ENCODE measurements at regions of chr14 and their contacts with region 1.

Region 1: GRCh38 chr14:105398044-105398725 is at the start of gene TEX22:
- DNase-seq: peak; percentile 86
- H3K4me3 Mint-ChIP-seq: peak within 1 kb of the TSS; percentile 93
- H3K27ac Mint-ChIP-seq: peak within 1 kb of the TSS; percentile 89
- H3K4me1 Mint-ChIP-seq: peaks cover 13% of the 10 kb centered on the region
- H3K27me3 Mint-ChIP-seq: no peaks in the 10 kb centered on the region
- total RNA-seq, gene TEX22: 7.4 and 9.1 TPM in 2 replicates

Region 2: DNA sequence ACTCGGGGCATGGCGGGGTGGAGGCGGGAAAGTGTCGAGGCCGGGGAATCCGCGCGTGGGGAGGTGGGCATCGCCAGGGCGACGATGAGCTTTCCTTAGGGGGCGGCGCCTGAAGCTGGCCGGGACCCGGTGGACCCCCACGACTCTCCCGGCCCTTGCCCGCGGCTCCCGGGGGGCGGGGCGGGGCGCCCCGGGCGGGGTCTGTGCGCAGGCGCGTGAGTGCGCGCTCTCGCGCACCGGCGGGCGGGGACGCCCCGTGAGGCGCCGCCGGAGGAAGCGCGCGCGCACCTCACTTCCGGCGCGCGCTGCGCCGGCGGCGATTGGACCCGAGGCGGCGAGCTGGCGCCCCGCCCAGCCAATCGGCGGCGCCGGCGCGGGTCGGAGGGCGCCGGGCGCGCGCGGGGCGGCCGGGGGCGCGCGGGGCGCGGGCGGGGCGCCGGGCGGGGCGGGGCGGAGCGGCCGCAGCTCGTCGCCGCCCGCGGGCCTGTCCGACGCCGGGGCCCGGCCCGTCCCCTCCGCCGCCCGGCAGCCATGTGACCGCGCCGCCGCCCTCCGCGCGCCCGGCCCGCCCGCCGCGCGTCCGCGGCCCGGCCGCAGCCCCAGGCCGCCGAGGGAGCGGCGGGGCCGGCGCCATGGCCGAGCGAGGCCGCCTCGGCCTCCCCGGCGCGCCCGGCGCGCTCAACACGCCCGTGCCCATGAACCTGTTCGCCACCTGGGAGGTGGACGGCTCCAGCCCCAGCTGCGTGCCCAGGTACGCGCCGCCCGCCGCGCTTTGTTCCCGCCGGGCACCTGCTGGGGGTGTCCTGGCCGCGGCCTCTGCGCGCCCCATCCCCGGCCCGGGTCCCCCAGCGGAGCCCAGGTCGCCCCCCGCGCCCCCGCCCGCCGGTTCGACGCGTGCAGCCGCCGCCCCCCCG is 83.6 kb before region 1 on chr14 and contains the start of gene PACS2:
- intact Hi-C with region 1: loop called (anchors 1 kb)
- DNase-seq: peak; percentile 78
- H3K4me3 Mint-ChIP-seq: peak within 1 kb of the TSS; percentile 90
- H3K27ac Mint-ChIP-seq: peak within 1 kb of the TSS; percentile 80
- H3K4me1 Mint-ChIP-seq: peaks cover 21% of the 10 kb centered on the region
- H3K27me3 Mint-ChIP-seq: peaks cover 11% of the 10 kb centered on the region
- total RNA-seq, gene PACS2: 28.2 and 32.3 TPM in 2 replicates

Region 3: DNA sequence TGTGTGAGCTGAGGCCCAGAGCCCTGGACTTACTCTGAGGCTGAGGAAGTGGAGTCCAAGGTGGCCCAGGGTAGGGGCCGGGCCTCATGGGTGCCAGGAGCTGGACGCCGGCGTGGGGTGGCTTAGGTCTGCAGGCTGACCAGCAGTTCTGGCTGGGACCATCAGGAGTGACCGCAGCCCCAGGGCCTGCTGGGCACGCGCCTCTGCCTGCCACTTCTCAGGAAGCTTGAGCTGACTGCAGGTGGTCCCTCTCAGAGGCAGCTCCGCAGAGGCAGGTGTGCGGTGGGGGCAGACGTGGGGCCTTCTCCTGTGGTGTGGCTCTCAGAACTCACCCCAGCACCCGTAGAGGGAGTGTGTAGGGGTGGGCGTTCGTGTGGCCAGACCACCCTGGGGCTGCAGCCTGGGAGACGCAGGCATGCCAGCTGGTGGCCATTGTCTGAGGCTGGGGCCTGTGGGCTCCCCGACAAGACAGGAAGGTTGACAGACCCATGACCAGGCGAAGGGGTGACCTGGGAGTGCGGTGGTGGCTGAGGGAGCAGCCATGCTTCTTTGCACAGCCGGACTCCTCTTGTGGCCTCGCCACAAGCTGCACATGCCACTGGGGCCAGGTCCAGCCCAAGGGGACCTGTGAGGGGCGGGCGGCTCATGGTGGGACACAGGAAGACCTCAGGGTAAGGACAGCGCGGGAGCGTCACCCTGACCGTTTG is 39.9 kb before region 1 on chr14:
- intact Hi-C with region 1: no loop called
- DNase-seq: no peak
- H3K4me3 Mint-ChIP-seq: no peak overlapping the region
- H3K27ac Mint-ChIP-seq: no peak overlapping the region
- H3K4me1 Mint-ChIP-seq: no peaks in the 10 kb centered on the region
- H3K27me3 Mint-ChIP-seq: no peaks in the 10 kb centered on the region

Region 4: DNA sequence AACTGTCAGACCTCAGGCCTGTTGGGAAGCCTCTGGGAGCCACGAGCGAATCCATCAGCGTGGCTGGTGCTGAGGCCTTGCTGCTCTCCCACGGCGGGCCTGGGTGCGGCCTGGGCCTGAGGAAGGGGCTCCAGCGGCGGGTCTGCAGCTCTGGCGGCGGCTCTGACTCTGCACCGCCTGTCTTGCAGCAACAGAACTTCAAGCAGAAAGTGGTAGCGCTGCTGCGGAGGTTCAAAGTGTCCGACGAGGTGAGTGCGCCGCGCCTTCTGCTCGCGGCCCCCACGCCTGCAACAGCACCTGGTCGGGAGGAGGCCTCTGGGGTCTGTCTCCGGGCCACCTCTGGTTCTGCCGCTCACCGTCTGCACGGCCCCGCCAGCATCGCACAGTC is 28.5 kb before region 1 on chr14:
- intact Hi-C with region 1: loop called (anchors 2 kb)
- DNase-seq: no peak
- H3K4me3 Mint-ChIP-seq: no peak overlapping the region
- H3K27ac Mint-ChIP-seq: no peak overlapping the region
- H3K4me1 Mint-ChIP-seq: peaks cover 5% of the 10 kb centered on the region
- H3K27me3 Mint-ChIP-seq: no peaks in the 10 kb centered on the region

Region 5: GRCh38 chr14:105414456-105415371 is 16.5 kb after region 1 on chr14:
- intact Hi-C with region 1: loop called (anchors 1 kb)
- DNase-seq: peak; percentile 61
- H3K4me3 Mint-ChIP-seq: peak overlapping the region; percentile 79
- H3K27ac Mint-ChIP-seq: no peak overlapping the region
- H3K4me1 Mint-ChIP-seq: peaks cover 5% of the 10 kb centered on the region
- H3K27me3 Mint-ChIP-seq: peaks cover 22% of the 10 kb centered on the region

Measured in activated T-helper 1 cell treated with anti-CD3 and anti-CD28 coated beads, Interleukin-12 subunit alpha, Interleukin-12 subunit beta, Interleukin-2, Interleukin-4 antibody, amounts not matched to agents 30 ng/mL and 10 ng/mL and 1 ng/mL, durations not matched to agents 14 hours and 24 hours and 36 hours (primary cell).